GM10248 (cell line): ENCODE measurements at regions of chr6 and their contacts with region 1.

Region 1: DNA sequence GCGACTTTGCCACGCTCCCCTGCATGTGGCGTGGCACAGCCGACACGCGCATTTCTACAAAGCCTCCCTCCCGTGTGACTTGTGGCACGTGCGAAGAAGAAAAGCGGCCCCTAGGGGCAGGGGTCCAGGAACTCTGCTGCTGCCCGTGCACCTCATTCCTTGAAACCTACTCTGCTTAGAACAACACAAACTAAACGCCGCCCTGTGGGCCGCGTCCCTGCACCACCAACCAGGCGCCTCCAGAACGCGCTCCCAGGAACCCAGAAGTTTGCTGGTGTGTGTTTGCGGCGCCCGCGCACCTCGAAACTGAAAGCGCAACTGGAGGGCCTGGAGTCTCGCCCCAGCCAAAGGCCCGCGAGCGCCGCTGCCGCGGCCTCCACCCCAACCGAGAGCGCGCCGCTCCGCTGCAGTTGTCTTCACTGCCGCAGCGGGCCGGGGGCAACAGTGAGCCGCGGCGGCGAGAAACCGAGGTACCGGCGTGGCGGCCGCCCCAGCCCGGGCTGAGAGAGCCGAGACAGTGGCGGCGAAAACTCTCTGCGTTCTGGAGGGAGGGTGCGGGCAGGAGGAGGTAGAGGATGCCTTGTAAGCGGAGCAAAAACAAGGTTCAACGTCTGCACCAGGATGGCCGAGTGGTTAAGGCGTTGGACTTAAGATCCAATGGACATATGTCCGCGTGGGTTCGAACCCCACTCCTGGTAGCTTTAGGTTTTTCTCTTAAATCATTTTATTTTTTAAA is 65.8 kb downstream of the STX11 start:
- DNase-seq: peak; percentile 94
- CTCF ChIP-seq: peak; percentile 62

Region 2: GRCh38 chr6:144098993-144099392 is 117.1 kb before region 1 on chr6:
- CTCF ChIA-PET with region 1: interaction called, 55 read pairs
- POLR2A ChIA-PET with region 1: no interaction called
- DNase-seq: no peak
- CTCF ChIP-seq: no peak

Region 3: DNA sequence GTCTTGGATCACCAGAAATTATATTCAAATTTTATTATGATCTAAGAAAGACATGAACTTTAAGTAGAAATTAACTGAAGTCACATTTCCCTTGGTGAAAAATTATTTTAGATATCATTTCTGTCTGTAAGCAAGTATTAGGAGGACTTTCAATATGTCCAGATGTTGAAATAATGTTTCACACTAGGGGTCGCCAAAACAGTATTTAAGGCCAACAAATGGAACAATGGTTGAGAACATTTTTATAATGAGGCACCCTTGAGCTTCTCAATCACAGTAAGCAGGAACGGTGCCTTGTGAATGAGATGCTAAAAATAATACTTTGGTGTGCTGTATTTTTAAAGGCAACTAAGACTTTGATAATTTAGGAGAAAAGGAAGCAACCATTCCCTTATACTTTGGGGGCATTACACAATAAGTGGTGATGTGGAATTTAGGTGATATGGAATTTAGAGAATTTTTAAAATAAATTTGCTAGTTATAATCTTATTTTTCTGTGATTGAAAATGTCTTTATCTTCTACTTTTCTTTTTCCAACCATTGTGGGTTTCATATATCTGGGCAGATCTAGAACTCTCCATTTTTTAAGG is 111.1 kb before region 1 on chr6:
- CTCF ChIA-PET with region 1: interaction called, 55 read pairs
- POLR2A ChIA-PET with region 1: no interaction called
- DNase-seq: peak; percentile 70
- CTCF ChIP-seq: peak; percentile 67

Region 4: GRCh38 chr6:144232176-144232831 is 16.2 kb after region 1 on chr6:
- CTCF ChIA-PET with region 1: interaction called, 16 read pairs
- POLR2A ChIA-PET with region 1: no interaction called
- DNase-seq: no peak
- CTCF ChIP-seq: no peak

Region 5: DNA sequence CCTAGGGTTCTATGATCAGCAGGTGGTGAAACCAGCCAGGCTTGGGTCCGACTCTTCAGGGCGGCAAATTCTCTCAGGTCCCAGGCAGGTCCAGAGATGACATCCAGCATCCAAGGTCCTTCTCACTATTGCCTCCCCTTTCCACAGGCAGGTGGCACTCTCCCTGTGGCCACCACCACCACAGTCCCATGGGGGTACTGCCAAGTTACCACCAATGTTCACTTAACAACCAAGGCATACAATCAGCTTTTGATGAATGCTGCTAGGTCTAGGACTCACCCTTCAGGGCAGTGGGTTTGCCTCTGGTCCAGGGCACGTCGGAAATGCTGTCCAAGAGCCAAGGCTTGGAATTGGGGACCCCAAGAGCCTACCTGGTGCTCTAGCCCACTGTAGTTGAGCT is 28.6 kb after region 1 on chr6:
- CTCF ChIA-PET with region 1: no interaction called
- POLR2A ChIA-PET with region 1: no interaction called
- DNase-seq: no peak
- CTCF ChIP-seq: no peak

Region 6: DNA sequence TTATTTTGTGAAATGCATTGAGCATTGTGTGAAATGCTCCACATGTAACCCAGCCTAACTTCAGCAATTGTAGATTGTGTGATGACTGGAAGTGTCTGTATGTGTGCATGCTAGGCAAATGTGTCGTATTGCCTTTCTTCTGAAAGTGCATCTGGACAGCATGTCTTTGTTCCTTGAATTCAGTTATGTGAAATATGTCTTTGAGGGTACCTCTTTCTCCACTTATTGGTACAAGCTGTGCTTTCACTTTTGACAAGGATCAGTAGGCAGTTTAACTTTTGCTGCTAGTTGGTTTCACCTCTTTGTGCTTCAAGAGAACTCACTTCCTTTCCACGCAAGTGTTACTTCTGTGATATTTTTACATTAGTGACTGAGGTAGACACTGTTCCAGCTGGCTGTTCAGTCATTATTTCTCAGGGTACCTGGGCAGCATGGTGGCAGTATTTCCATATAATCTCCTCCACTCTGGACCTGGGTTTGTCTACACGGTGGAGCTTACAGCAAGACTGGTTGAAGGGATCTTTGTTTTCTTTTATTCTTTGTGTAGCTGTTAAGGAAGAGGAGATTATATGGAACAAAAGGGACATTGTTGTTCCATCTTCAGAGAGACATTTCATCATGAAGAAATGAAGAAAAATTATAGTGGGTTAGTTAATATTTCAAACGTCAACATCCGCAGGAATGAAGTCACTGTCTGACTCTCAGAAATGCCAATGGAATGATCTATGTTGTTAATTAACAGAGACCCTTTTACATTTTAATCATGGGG is 244.4 kb after region 1 on chr6:
- CTCF ChIA-PET with region 1: no interaction called
- POLR2A ChIA-PET with region 1: no interaction called
- DNase-seq: peak; percentile 33
- CTCF ChIP-seq: no peak